Activated T-helper 2 cell treated with anti-CD3 and anti-CD28 coated beads, Interferon-gamma antibody, Interleukin-2, Interleukin-4, amounts not matched to agents 10 μg/mL and 5 μg/mL and 100 μg/mL, durations not matched to agents 14 hours and 24 hours and 36 hours (primary cell): ENCODE measurements at regions of chr7 and their contacts with region 1.

Region 1: GRCh38 chr7:156892821-156893706 is at the start of gene LMBR1:
- DNase-seq: peak; percentile 91
- H3K4me3 Mint-ChIP-seq: peak within 1 kb of the TSS; percentile 94
- H3K27ac Mint-ChIP-seq: peak within 1 kb of the TSS; percentile 93
- H3K4me1 Mint-ChIP-seq: peaks cover 46% of the 10 kb centered on the region
- H3K27me3 Mint-ChIP-seq: no peaks in the 10 kb centered on the region
- total RNA-seq, gene LMBR1: 60.5 and 61.7 TPM in 2 replicates

Region 2: GRCh38 chr7:155644178-155644970 is 1248.7 kb before region 1 on chr7 and contains the start of gene RBM33:
- intact Hi-C with region 1: loop called (anchors 10 kb)
- DNase-seq: peak; percentile 79
- H3K4me3 Mint-ChIP-seq: peak within 1 kb of the TSS; percentile 99
- H3K27ac Mint-ChIP-seq: peak within 1 kb of the TSS; percentile 100
- H3K4me1 Mint-ChIP-seq: peaks cover 26% of the 10 kb centered on the region
- H3K27me3 Mint-ChIP-seq: no peaks in the 10 kb centered on the region
- total RNA-seq, gene RBM33: 79.8 and 80.3 TPM in 2 replicates

Region 3: DNA sequence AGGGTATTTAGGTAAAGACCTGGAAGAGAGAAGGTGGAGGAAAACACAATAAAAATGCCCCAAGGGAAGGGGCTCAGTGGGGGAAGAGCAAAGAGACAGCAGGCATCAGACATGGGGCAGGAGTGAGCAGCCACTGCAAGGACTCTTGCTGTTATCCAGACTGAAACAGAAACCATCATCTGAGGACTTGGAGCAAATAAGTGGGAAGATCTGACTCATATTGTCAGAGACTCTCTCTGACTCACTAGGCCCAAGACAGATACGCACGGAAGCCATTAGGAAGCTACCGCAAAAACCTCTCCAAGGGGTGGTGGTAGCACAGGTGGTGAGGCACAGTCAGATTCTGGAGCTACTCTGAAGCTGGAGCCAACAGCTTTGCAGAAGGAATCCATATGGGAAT is 141.7 kb before region 1 on chr7:
- intact Hi-C with region 1: loop called (anchors 5 kb)
- DNase-seq: peak; percentile 62
- H3K4me3 Mint-ChIP-seq: peak overlapping the region; percentile 24
- H3K27ac Mint-ChIP-seq: no peak overlapping the region
- H3K4me1 Mint-ChIP-seq: peaks cover 27% of the 10 kb centered on the region
- H3K27me3 Mint-ChIP-seq: no peaks in the 10 kb centered on the region

Region 4: GRCh38 chr7:156861212-156861611 is 31.9 kb before region 1 on chr7:
- intact Hi-C with region 1: loop called (anchors 2 kb)
- DNase-seq: no peak
- H3K4me3 Mint-ChIP-seq: no peak overlapping the region
- H3K27ac Mint-ChIP-seq: no peak overlapping the region
- H3K4me1 Mint-ChIP-seq: no peaks in the 10 kb centered on the region
- H3K27me3 Mint-ChIP-seq: no peaks in the 10 kb centered on the region

Region 5: DNA sequence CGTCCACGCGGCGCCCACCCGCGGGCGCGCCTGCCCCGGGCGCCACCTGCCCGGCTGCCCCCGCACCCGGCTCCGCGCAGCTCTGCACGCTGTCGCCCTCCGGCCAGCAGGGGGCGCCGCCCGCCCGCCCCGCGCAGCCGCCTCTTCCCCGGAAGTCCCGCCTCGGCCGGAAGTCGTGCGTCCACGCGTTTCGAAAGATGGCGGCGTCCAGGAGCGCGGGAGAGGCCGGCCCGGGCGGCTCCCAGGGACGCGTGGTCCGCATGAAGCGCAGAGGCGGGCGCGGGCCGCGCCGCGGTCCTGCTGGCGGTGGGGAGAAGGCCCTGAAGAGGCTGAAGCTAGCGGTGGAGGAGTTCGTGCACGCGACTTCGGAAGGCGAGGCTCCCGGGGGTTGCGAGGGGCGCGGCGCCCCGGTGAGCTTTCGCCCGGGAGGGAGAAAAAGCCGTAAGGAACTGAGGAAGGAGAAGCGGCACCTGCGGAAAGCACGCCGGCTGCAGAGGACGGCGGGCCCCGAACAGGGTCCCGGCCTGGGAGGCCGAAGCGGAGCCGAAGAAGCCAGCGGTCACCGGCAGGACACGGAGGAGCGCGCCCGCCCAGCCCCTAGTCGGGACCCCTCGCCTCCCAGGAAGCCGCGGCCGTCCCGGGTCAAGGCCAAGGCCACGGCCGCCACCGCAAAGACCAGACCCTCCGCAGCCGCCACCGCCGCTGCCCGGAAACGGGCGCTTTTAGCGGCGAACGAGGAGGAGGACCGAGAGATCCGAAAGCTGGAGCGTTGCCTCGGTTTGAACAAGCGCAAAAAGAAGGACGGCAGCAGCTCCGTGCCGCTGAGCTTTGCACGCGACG is 56.7 kb after region 1 on chr7 and contains the start of gene NOM1:
- intact Hi-C with region 1: loop called (anchors 1 kb)
- DNase-seq: peak; percentile 84
- H3K4me3 Mint-ChIP-seq: peak within 1 kb of the TSS; percentile 92
- H3K27ac Mint-ChIP-seq: peak within 1 kb of the TSS; percentile 89
- H3K4me1 Mint-ChIP-seq: peaks cover 24% of the 10 kb centered on the region
- H3K27me3 Mint-ChIP-seq: peaks cover 20% of the 10 kb centered on the region
- total RNA-seq, gene NOM1: 46.7 and 47.2 TPM in 2 replicates

Region 6: DNA sequence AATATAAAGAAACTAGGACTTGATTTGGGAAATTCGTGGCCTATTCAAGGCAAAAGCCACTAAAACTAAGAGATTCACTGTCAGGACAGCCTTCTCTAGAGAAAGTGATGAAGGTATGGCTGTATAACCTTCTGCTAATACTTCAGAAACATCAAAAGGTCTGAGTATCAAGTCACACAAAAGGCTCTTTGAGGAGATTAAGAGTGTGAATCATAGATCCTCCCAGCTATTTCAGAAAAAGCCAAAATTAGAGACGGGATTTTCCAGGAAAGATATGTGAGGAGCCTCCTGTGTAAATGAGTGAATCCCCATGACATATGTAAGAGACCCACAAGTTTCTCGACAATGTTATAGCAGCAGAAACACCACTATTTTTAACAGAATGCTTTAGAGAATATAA is 301.9 kb after region 1 on chr7:
- intact Hi-C with region 1: no loop called
- DNase-seq: no peak
- H3K4me3 Mint-ChIP-seq: no peak overlapping the region
- H3K27ac Mint-ChIP-seq: peak overlapping the region; percentile 20
- H3K4me1 Mint-ChIP-seq: no peaks in the 10 kb centered on the region
- H3K27me3 Mint-ChIP-seq: no peaks in the 10 kb centered on the region